IMR-90 (cell line): ENCODE measurements at regions of chr16 and their contacts with region 1.

Region 1: DNA sequence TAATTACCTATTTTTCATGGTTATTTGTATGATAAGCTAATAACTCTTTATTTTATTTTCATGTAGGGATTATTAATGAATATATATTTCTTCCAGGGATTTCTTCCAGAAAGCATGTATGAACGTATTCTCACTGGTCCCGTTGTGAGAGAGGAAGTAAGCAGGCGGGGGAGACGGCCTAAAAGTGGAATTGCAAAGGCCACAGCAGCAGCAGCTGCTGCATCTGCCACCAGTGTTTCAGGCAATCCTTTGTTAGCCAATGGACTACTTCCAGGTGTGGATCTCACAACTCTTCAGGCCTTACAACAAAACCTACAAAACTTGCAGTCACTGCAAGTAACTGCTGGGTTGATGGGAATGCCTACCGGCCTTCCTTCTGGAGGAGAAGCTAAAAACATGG is 110.3 kb upstream of the RBL2 start:
- DNase-seq: no peak
- ATAC-seq: no peak
- H3K4me3 ChIP-seq: no peak overlapping the region
- H3K27ac ChIP-seq: no peak overlapping the region
- H3K4me1 ChIP-seq: no peaks in the 10 kb centered on the region
- H3K27me3 ChIP-seq: no peaks in the 10 kb centered on the region
- CTCF ChIP-seq: no peak
- POLR2A ChIP-seq: no peak
- RAD21 ChIP-seq: no peak

Region 2: GRCh38 chr16:53282975-53283946 is 40.7 kb before region 1 on chr16:
- CTCF ChIA-PET with region 1: no interaction called
- POLR2A ChIA-PET with region 1: no interaction called
- dilution Hi-C with region 1: no loop called
- in situ Hi-C with region 1: no loop called
- intact Hi-C with region 1: no loop called
- DNase-seq: peak; percentile 49
- ATAC-seq: no peak
- H3K4me3 ChIP-seq: no peak overlapping the region
- H3K27ac ChIP-seq: no peak overlapping the region
- H3K4me1 ChIP-seq: no peaks in the 10 kb centered on the region
- H3K27me3 ChIP-seq: no peaks in the 10 kb centered on the region
- CTCF ChIP-seq: peak; percentile 50
- POLR2A ChIP-seq: no peak
- RAD21 ChIP-seq: peak; percentile 57

Region 3: GRCh38 chr16:53457670-53458069 is 133.7 kb after region 1 on chr16:
- CTCF ChIA-PET with region 1: no interaction called
- POLR2A ChIA-PET with region 1: no interaction called
- dilution Hi-C with region 1: no loop called
- in situ Hi-C with region 1: no loop called
- intact Hi-C with region 1: loop called (anchors 10 kb)
- DNase-seq: no peak
- ATAC-seq: no peak
- H3K4me3 ChIP-seq: no peak overlapping the region
- H3K27ac ChIP-seq: no peak overlapping the region
- H3K4me1 ChIP-seq: no peaks in the 10 kb centered on the region
- H3K27me3 ChIP-seq: no peaks in the 10 kb centered on the region
- CTCF ChIP-seq: no peak
- POLR2A ChIP-seq: no peak
- RAD21 ChIP-seq: no peak

Region 4: DNA sequence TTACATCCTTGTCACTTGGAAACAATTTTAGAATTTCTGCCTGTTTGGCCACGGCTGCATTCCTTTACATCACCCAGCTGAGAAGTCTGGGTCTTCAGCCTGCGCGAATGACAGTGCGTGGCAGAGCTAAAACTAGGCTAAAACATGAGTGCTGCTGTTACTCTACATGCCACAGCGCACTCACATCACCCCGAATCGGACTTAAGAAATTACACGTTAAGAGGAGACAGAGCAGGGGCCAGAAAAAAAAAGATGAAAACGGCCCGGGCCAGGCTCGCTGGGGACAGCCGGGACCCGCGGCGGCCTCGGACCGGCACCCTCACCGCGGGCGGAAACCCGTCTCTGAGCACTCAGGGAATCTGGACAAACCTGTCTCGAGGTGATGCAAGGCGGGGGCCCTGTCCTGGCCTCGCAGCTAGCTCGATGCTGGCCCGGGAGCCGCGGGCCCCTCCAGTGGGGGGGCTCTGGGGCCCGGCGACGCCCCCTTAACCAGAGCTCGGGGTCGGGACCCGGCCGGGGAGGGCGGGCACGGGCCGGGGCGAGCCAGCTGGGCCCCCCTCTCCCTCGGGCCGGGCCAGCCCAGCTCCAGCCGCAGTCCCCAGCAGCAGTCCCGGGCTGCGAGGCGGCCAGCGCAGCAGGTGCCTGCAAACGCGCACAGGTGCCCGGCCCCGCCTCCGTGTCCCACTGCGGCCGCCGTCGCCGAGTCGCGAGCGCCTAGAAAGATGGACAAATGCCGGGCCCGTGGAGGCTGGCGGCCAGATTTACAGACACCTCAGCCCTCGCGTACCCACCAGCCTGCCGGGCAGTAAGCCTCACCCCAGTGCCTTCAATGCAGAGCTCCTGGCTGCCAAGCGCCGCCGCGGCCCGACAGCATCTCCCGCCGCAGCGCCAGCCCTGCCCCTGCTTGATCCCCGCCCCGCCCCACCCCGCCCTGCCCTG is 178.7 kb after region 1 on chr16 and contains the start of gene AKTIP:
- CTCF ChIA-PET with region 1: no interaction called
- POLR2A ChIA-PET with region 1: interaction called, 11 read pairs
- dilution Hi-C with region 1: no loop called
- in situ Hi-C with region 1: no loop called
- intact Hi-C with region 1: no loop called
- DNase-seq: peak; percentile 52
- ATAC-seq: peak; percentile 9
- H3K4me3 ChIP-seq: peak within 1 kb of the TSS; percentile 83
- H3K27ac ChIP-seq: peak within 1 kb of the TSS; percentile 91
- H3K4me1 ChIP-seq: peaks cover 6% of the 10 kb centered on the region
- H3K27me3 ChIP-seq: no peaks in the 10 kb centered on the region
- CTCF ChIP-seq: no peak
- POLR2A ChIP-seq: no peak
- RAD21 ChIP-seq: no peak
- total RNA-seq, gene AKTIP: 18.9 and 19.9 TPM in 2 replicates